ENCODE measurements at regions of chr5 and their contacts with region 1.

Region 1: DNA sequence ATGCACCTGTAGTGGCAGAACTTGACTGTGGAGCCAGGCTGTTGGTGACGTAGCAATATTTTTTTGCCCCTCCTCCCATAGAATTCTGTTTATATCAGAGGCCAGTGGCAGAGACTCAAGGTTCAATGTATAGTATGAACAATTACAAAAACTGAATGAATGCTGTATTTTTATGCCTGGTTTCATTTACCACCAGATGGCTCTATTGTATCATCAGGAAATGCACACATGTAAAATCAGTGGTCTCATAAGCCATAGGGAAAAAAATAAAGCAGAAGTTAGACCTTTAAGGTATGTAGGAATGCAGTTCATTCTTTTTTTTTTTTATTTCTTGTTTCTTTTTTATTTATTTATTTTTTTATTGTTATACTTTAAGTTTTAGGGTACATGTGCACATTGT is 43.6 kb downstream of the CCDC192 start:
- DNase-seq: peak; percentile 4
- ATAC-seq: no peak
- H3K4me3 ChIP-seq: no peak overlapping the region
- H3K4me3 Mint-ChIP-seq: no peak overlapping the region
- H3K27ac ChIP-seq: no peak overlapping the region
- H3K27ac Mint-ChIP-seq: no peak overlapping the region
- H3K4me1 ChIP-seq: no peaks in the 10 kb centered on the region
- H3K4me1 Mint-ChIP-seq: no peaks in the 10 kb centered on the region
- H3K27me3 ChIP-seq: no peaks in the 10 kb centered on the region
- H3K27me3 Mint-ChIP-seq: peaks cover 5% of the 10 kb centered on the region
- CTCF ChIP-seq: peak; percentile 19

Region 2: GRCh38 chr5:127796211-127796610 is 49.5 kb after region 1 on chr5:
- CTCF ChIA-PET with region 1: no interaction called
- POLR2A ChIA-PET with region 1: no interaction called
- intact Hi-C with region 1: no loop called
- DNase-seq: no peak
- ATAC-seq: no peak
- H3K4me3 ChIP-seq: no peak overlapping the region
- H3K4me3 Mint-ChIP-seq: no peak overlapping the region
- H3K27ac ChIP-seq: no peak overlapping the region
- H3K27ac Mint-ChIP-seq: no peak overlapping the region
- H3K4me1 ChIP-seq: no peaks in the 10 kb centered on the region
- H3K4me1 Mint-ChIP-seq: no peaks in the 10 kb centered on the region
- H3K27me3 ChIP-seq: no peaks in the 10 kb centered on the region
- H3K27me3 Mint-ChIP-seq: peaks cover 3% of the 10 kb centered on the region
- CTCF ChIP-seq: no peak

Region 3: DNA sequence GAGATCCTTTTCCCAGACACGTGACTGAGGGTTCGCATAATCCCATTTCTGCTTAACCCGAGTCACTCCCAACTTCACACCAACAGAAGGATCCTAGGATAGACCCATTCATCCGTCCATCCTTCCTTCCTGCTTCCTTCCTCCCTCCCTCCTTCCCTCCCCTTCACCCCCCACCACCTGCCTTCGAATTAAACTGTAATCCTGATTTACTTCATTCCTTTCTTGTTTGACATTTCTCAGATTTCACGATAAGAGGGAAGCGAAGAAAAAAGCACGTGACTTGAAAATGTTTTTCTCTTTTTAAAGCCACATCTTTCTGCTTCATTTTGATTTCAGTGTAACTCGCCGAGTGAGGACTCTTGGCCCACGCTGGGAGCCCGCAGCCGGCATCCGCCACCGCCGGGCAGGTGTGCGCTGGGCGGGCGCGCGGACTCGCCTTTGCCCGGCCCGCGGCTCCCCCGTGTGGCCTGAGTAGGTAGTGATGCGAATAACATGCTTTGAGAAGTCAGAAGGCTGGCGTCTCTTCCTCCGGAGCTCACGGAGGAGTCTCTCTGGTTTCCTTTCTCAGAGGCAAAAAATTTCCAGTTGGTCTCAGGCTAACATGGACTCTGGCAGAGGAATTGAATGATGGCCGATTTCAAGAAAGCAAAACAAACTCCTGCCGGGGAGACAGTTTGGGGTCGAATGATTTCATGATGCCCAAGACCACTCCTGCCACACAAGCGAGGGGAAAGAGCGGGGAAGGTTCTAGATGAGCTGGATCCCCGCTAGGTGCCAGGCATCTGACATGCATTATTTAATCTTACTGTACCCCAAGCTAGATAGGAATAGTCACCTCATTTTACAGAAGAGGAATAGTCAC is 454.5 kb after region 1 on chr5:
- CTCF ChIA-PET with region 1: no interaction called
- POLR2A ChIA-PET with region 1: no interaction called
- intact Hi-C with region 1: loop called (anchors 1 kb)
- DNase-seq: peak; percentile 76
- ATAC-seq: peak; percentile 99
- H3K4me3 ChIP-seq: no peak overlapping the region
- H3K4me3 Mint-ChIP-seq: peak overlapping the region; percentile 27
- H3K27ac ChIP-seq: no peak overlapping the region
- H3K27ac Mint-ChIP-seq: no peak overlapping the region
- H3K4me1 ChIP-seq: peaks cover 7% of the 10 kb centered on the region in 2 donors
- H3K4me1 Mint-ChIP-seq: peaks cover 7% of the 10 kb centered on the region
- H3K27me3 ChIP-seq: peaks cover 0 to 2% (median 0%) of the 10 kb centered on the region in 4 experiments
- H3K27me3 Mint-ChIP-seq: peaks cover 3% of the 10 kb centered on the region
- CTCF ChIP-seq: peak; percentile 91

Region 4: GRCh38 chr5:128674825-128675446 is 928.2 kb after region 1 on chr5:
- CTCF ChIA-PET with region 1: no interaction called
- POLR2A ChIA-PET with region 1: no interaction called
- intact Hi-C with region 1: loop called (anchors 5 kb)
- DNase-seq: peak; percentile 6
- ATAC-seq: no peak
- H3K4me3 ChIP-seq: no peak overlapping the region
- H3K4me3 Mint-ChIP-seq: no peak overlapping the region
- H3K27ac ChIP-seq: no peak overlapping the region
- H3K27ac Mint-ChIP-seq: no peak overlapping the region
- H3K4me1 ChIP-seq: no peaks in the 10 kb centered on the region
- H3K4me1 Mint-ChIP-seq: no peaks in the 10 kb centered on the region
- H3K27me3 ChIP-seq: no peaks in the 10 kb centered on the region
- H3K27me3 Mint-ChIP-seq: no peaks in the 10 kb centered on the region
- CTCF ChIP-seq: peak; percentile 59

Measured in B cell (primary cell).